ENCODE measurements at regions of chr14 and their contacts with region 1.

Region 1: DNA sequence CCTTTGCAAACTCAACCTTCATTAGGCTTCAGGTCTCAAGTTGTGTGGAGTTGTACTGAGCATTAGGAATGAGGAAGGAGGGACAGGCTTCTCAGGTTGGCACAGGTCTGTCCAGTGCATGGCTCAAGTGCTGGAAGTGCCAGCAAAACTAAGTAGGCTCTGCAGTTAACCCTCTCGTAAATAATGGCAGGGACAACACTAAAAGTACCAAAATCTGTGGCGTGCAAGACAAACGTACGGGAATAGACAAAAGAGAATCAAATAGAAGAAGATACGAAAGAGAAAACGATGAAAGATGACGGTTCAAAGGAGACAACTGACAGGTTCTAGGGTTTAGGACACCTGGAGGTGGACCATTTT is 612 bp downstream of the TRAPPC6B start:
- DNase-seq: no peak

Region 2: DNA sequence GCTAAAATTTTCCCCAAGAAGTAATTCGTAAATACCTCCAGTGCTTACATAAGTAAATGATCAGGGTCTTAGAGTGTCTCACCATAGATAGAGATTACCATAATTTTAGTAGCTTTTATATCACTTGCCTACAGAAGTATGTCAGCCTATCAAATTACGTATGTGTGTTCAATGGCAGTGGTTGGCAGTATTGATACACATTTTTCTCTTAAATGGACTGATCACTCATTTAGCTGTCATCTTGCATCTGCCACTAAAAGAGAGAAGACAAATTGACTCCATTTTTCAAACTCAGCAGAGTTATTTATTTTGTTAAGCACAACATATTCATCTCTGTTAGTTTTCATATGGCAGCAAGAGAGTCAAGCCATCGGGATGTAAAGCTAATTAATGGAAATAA is 500.5 kb before region 1 on chr14:
- CTCF ChIA-PET with region 1: no interaction called
- POLR2A ChIA-PET with region 1: no interaction called
- DNase-seq: no peak

Region 3: GRCh38 chr14:39114073-39114838 is 55.3 kb before region 1 on chr14 and contains the start of gene GEMIN2:
- CTCF ChIA-PET with region 1: interaction called, 3 read pairs
- POLR2A ChIA-PET with region 1: interaction called, 48 read pairs
- DNase-seq: peak; percentile 95

Region 4: DNA sequence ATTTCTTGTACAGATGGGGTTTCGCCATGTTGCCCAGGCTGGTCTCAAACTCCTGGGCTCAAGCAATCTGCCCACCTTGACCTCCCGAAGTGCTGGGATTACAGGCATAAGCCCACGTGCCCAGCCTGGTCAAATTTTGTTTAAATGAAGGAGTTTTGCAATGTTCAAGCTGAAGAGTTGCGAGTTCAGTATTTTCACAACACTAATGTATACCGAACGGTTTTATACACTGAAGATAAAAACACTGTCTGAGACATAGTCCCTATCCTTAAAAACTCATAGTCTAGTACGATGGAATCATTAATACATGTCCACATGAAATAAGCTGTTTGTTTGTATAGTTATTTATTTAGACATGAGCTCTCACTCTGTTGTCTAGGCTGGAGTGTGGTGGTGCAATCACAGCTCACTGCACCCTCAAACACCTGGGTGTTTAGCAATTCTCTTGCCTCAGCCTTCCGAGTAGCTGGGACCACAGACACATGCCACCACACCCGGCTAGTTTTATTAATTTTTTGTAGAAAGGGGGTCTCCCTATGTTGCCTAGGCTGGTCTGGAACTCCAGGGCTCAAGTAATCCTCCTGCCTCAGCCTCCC is 14.8 kb before region 1 on chr14:
- CTCF ChIA-PET with region 1: no interaction called
- POLR2A ChIA-PET with region 1: interaction called, 76 read pairs
- DNase-seq: no peak

Region 5: DNA sequence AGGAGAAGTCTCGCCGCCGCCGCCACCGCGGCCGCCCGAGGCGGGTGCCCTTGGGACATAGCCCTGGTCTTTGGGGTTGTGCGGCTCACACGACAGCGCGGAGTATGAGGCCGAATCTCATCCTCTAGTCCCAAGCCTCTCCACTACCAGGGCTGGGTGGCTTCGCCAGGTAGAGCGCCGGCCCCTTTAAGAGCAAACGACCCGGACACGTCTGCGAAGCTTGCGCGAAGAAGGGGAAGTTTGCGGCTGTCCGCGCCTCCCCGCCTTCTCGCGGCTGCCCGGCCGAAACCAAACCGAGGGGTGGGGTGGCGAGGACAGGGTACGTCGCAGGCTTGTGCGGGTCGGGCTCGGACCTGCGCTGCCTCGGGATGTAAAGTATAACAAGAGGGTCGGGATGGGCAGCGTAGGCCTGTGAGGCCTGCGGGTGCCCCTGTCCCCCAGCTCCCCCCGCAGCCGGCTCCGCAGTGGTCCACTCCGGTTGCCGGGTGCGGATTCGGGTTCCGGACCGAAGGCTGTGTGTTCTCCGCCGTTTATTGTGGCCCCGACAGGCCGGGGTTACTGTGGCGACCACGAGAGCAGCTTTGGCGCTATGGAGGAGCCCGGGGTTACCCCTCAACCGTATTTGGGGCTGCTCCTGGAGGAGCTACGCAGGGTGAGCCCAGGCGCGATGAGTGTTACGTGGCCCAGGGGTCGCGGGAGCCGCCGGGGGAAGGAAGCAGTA is 97.5 kb after region 1 on chr14:
- CTCF ChIA-PET with region 1: interaction called, 4 read pairs
- POLR2A ChIA-PET with region 1: interaction called, 13 read pairs
- DNase-seq: peak; percentile 77

Region 6: GRCh38 chr14:39432179-39432618 is 262.7 kb after region 1 on chr14 and contains the start of gene FBXO33:
- CTCF ChIA-PET with region 1: no interaction called
- POLR2A ChIA-PET with region 1: interaction called, 21 read pairs
- DNase-seq: peak; percentile 90